Dendritic cell treated with granulocyte-macrophage colony-stimulating factor and Interleukin-4, amounts not matched to agents 40 ng/mL and 50 ng/mL, for 4 days (primary cell): ENCODE measurements at regions of chr1 and their contacts with region 1.

Region 1: GRCh38 chr1:161209790-161210409 is 5.2 kb upstream of the FCER1G start:
- H3K4me3 Mint-ChIP-seq: no peak overlapping the region
- H3K27ac Mint-ChIP-seq: peak overlapping the region; percentile 52
- H3K4me1 Mint-ChIP-seq: peaks cover 46% of the 10 kb centered on the region
- H3K27me3 Mint-ChIP-seq: no peaks in the 10 kb centered on the region

Region 2: DNA sequence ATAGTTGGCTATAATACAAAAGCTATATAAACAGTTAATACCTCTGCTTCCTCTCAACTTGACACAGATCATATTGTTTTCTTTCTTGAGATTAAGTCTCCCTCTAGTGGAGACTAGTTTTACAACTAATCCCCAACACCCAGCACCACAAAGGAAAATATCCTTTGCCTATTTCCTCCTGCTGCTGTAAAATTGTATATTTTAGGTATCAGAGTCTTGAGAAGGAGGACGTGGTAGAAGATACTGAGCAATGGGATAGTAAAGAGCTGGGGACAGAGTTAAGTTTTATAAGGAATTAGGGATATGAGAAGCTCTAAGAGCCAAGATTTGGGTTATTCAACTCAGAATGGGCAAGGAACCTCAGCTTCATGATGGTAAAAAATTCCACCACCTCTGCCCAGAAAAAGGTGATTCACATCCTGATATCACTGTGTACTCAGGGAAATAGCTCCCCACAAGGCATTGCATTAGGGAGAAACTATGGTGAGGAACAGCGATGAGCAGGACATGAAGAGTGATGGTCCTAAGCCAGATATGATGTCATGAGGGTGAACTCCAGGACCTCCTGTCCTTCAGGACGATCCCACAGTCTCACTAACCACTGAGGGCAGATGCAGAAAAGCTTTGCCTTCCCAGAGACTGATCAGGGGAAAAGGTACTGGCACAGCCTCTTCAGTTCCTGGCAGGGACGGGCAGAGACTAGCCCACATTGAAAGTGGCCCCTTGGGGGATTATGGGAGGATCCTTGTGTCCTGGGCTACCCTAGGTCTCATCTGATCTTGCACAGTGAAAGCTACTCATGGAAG is 172.5 kb after region 1 on chr1:
- intact Hi-C with region 1: loop called (anchors 5 kb)
- H3K4me3 Mint-ChIP-seq: no peak overlapping the region
- H3K27ac Mint-ChIP-seq: peak overlapping the region; percentile 52
- H3K4me1 Mint-ChIP-seq: peaks cover 14% of the 10 kb centered on the region
- H3K27me3 Mint-ChIP-seq: peaks cover 2% of the 10 kb centered on the region